ENCODE measurements at regions of chr11 and their contacts with region 1.

Region 1: DNA sequence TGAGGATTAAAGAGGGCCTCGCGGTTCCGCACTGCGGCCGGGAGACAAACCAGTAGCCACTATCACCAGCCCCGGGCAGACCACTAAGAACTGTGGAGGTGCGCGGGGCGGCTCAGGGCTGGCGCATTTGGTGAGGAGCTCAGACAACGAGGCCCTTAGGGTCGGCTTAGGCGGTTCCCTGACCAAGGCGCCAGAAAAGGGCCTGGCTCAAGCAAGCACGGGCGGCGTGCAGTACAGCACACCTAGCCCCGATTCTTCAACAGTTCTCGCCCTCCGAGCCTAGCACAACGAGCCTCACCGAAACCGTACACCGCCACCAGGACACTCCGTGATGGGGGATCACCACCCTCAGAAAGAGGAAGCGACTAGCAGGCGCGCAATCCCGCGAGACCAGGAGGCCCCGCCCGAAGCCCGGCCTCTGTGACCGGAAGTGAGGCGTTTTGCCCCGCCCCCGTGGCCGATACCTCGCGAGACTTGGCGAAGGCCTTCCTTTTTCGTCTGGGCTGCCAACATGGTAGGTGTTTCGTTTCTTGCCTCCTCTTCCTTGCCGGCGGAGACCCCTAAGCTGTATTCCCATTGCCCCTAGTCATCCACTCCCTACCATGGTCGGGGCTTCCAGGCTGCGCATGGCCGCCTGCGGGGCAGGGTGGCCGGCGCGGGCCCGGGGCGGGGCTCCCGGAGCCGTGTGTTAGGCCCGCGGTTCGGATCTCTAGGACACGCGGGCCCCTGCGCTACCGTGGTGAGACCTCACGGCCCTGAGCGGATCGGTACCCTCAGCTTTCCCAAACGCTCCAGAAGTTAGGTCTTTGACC is at the starts of genes RPL27A and TRIM66:
- DNase-seq: peak; percentile 98 to 100
- ATAC-seq: peak; percentile 95 to 99 (median 96)
- H3K4me3 ChIP-seq: peak within 1 kb of the TSS; percentile 58
- H3K4me3 Mint-ChIP-seq: peak within 1 kb of the TSS; percentile 87
- H3K27ac ChIP-seq: peak within 1 kb of the TSS; percentile 78
- H3K27ac Mint-ChIP-seq: peak within 1 kb of the TSS; percentile 93
- H3K4me1 ChIP-seq: peaks cover 21% of the 10 kb centered on the region
- H3K4me1 Mint-ChIP-seq: peaks cover 31 to 37% of the 10 kb centered on the region in 2 donors
- H3K27me3 ChIP-seq: no peaks in the 10 kb centered on the region
- H3K27me3 Mint-ChIP-seq: no peaks in the 10 kb centered on the region
- CTCF ChIP-seq: no peak
- total RNA-seq, gene RPL27A: 672 to 1,208 (median 807) TPM
- total RNA-seq, gene TRIM66: 13.7 to 24.4 (median 14.3) TPM

Region 2: DNA sequence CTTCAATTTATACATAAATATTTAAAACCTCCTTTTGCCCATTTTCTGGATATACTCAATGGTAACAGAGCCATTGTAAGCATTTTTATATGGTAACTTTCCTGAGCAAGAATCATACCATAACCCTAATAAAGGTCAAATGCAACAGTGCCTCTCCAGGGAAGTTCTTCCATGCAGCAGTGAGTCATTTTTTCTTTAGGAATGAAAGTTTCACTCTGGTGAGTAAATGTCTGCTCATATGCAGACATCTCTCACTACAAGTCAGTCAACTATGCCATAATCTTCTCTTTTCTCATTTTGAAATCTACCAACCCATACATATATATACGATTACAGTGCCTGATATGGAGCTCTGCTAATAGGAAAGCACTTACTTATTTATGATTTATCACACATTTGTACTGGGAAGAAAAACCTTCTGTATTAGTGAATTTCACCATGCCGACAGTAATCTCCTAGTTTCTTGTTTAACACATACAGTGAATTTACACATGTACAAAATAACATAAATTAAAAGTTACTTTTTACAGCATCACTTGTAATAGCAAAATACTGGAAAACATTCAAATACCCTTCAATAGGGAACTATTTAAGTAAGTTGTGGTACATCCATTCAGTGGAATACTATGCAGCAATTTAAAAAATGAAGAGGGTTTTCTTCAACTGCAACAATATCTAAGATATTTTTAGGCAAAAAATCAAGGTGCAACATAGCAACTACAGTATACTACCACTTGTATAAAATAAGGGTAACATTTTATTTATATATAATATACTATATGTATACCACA is 104.5 kb before region 1 on chr11:
- intact Hi-C with region 1: no loop called
- DNase-seq: no peak
- ATAC-seq: no peak
- H3K4me3 ChIP-seq: no peak overlapping the region
- H3K4me3 Mint-ChIP-seq: no peak overlapping the region
- H3K27ac ChIP-seq: no peak overlapping the region
- H3K27ac Mint-ChIP-seq: no peak overlapping the region
- H3K4me1 ChIP-seq: no peaks in the 10 kb centered on the region
- H3K4me1 Mint-ChIP-seq: no peaks in the 10 kb centered on the region
- H3K27me3 ChIP-seq: no peaks in the 10 kb centered on the region
- H3K27me3 Mint-ChIP-seq: peaks cover 10 to 11% of the 10 kb centered on the region in 2 donors
- CTCF ChIP-seq: no peak

Region 3: DNA sequence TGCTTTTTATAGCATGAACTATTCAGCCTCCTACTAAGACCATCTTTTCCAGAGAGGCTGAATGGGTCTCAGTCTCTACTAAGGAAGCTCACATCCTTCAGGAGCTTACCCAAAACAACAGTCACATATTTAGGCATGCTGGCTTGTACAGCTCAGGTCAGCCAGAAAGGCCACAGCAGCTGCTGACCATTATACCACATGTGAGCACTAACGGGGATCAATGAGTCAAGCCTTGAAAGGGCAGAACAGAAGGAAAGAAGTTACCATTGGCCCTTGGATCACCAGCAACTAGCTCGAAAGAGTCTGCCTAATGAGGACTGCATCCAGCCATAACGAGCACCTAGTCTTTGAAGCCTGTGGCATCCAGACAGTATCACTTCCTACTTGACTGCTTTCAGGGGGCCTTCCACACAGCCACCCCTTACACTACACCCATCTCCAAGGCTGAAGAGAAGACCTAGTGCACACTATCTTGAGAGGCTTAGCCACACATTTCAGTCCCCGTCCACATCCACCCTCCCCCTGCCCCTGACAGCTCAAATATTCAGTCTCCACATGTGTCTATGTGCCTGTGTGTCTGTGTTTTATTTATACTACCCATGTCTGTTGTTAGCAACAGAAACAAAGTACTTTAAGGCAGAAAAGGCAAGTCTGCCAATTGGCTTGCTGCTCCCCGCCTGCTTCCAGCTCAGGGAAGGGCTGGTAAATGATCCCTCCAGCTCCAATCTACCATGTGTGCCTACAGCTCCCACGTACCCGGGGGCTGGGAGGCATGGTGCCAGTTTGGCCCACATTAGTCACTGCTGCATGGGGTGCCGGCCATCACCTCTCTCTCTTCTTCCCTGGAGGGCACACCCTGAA is 95.6 kb after region 1 on chr11:
- intact Hi-C with region 1: loop called (anchors 5 kb)
- DNase-seq: peak in 1 of 2 donors; percentile 19
- ATAC-seq: peak; percentile 52 to 62 (median 58)
- H3K4me3 ChIP-seq: no peak overlapping the region
- H3K4me3 Mint-ChIP-seq: peak overlapping the region; percentile 32
- H3K27ac ChIP-seq: peak overlapping the region; percentile 60
- H3K27ac Mint-ChIP-seq: peak overlapping the region; percentile 89 to 95
- H3K4me1 ChIP-seq: peaks cover 20% of the 10 kb centered on the region
- H3K4me1 Mint-ChIP-seq: peaks cover 45 to 55% of the 10 kb centered on the region in 2 donors
- H3K27me3 ChIP-seq: no peaks in the 10 kb centered on the region
- H3K27me3 Mint-ChIP-seq: peaks cover 7 to 15% of the 10 kb centered on the region in 2 donors
- CTCF ChIP-seq: no peak

Region 4: GRCh38 chr11:8813658-8814057 is 131.1 kb after region 1 on chr11:
- intact Hi-C with region 1: loop called (anchors 1 kb)
- DNase-seq: peak; percentile 37 to 47
- ATAC-seq: peak; percentile 58 to 80 (median 77)
- H3K4me3 ChIP-seq: no peak overlapping the region
- H3K4me3 Mint-ChIP-seq: no peak overlapping the region
- H3K27ac ChIP-seq: peak overlapping the region; percentile 13
- H3K27ac Mint-ChIP-seq: no peak overlapping the region
- H3K4me1 ChIP-seq: peaks cover 11% of the 10 kb centered on the region
- H3K4me1 Mint-ChIP-seq: peaks cover 9 to 10% of the 10 kb centered on the region in 2 donors
- H3K27me3 ChIP-seq: no peaks in the 10 kb centered on the region
- H3K27me3 Mint-ChIP-seq: peaks cover 5 to 10% of the 10 kb centered on the region in 2 donors
- CTCF ChIP-seq: peak; percentile 66

Region 5: DNA sequence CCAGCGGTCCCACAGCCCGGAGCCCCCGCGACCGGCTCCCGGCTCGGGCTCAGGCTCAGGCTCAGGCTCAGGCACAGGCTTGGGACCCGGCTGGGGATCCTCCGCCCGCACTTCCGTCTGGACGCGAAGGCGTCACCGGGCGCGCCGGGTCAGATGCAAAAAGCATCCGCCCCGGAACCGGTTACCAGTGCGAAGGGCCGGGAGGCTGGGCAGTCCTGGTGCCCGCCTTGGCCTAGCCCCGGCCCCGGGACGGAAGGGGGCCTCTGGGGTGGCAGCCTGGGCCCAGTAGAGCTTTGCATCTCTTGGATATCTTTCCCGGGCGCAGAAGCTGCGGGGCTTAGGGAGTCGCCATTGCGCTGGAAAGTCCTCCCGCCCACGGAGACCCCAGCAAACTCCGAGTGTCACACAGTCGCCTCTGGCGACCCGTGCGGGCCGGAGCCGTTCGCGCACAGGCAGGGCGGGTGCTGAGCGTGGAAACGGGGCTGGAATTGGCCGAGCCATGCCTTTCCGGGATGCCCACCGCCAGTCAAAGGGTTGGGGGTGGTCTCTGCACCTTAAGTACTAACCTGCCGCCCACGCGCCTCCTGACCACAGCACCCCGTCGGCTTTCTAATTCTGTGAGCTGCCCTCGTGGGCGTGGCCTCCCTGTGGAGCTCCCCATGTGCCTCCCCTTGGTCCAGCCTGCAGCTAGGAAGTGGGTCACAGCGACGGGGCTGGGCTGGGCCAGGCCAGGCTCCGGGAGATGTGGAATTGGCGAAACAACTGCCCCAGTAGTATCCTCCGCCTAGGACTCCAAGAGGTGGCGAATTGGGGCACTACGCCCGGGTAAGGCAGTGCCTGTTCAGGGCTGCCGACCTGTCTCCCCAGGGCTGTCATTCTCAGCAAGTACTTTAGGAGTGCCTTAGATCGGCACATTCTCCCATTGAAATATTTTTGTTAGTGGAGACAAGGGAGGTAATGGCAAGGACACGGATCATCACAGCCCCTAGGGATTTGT is 282.1 kb after region 1 on chr11 and contains the start of gene TMEM9B:
- intact Hi-C with region 1: loop called (anchors 1 kb)
- DNase-seq: peak; percentile 73 to 85
- ATAC-seq: peak; percentile 79 to 91 (median 86)
- H3K4me3 ChIP-seq: peak within 1 kb of the TSS; percentile 97
- H3K4me3 Mint-ChIP-seq: peak within 1 kb of the TSS; percentile 95
- H3K27ac ChIP-seq: peak within 1 kb of the TSS; percentile 98
- H3K27ac Mint-ChIP-seq: peak within 1 kb of the TSS; percentile 91 to 96
- H3K4me1 ChIP-seq: peaks cover 19% of the 10 kb centered on the region
- H3K4me1 Mint-ChIP-seq: peaks cover 23 to 31% of the 10 kb centered on the region in 2 donors
- H3K27me3 ChIP-seq: no peaks in the 10 kb centered on the region
- H3K27me3 Mint-ChIP-seq: no peaks in the 10 kb centered on the region
- CTCF ChIP-seq: no peak
- total RNA-seq, gene TMEM9B: 46.5 to 55.2 (median 51.4) TPM